Activated T-helper 2 cell treated with anti-CD3 and anti-CD28 coated beads, Interferon-gamma antibody, Interleukin-2, Interleukin-4, amounts not matched to agents 10 μg/mL and 5 μg/mL and 100 μg/mL, durations not matched to agents 14 hours and 24 hours and 36 hours (primary cell): ENCODE measurements at regions of chr4 and their contacts with region 1.

Region 1: GRCh38 chr4:41692717-41693345 is 55.7 kb downstream of the PHOX2B start:
- DNase-seq: peak; percentile 11
- H3K4me3 Mint-ChIP-seq: no peak overlapping the region
- H3K27ac Mint-ChIP-seq: no peak overlapping the region
- H3K4me1 Mint-ChIP-seq: peaks cover 3% of the 10 kb centered on the region
- H3K27me3 Mint-ChIP-seq: peaks cover 6% of the 10 kb centered on the region

Region 2: DNA sequence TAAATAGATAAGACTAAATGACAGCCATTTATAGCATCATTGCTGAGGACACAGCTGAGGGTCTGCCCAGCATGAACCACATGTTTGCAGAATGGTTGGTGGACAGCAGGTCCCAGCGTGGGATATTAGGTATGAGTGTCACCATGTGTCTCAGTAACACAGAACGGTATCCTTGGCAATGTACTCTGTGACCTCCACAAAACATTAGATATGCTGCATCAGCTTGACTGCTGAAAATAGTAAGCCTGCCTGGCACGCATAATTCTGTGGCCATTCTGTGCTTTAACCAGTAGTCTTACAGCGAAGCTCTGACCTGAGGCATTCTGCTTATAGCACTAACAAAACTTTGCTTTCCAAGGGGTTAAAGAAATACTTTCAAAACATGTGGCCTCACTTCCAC is 122.9 kb before region 1 on chr4:
- intact Hi-C with region 1: no loop called
- DNase-seq: no peak
- H3K4me3 Mint-ChIP-seq: no peak overlapping the region
- H3K27ac Mint-ChIP-seq: no peak overlapping the region
- H3K4me1 Mint-ChIP-seq: no peaks in the 10 kb centered on the region
- H3K27me3 Mint-ChIP-seq: no peaks in the 10 kb centered on the region

Region 3: GRCh38 chr4:41887821-41888686 is 195.2 kb after region 1 on chr4:
- intact Hi-C with region 1: loop called (anchors 1 kb)
- DNase-seq: no peak
- H3K4me3 Mint-ChIP-seq: no peak overlapping the region
- H3K27ac Mint-ChIP-seq: no peak overlapping the region
- H3K4me1 Mint-ChIP-seq: no peaks in the 10 kb centered on the region
- H3K27me3 Mint-ChIP-seq: peaks cover 33% of the 10 kb centered on the region

Region 4: GRCh38 chr4:42296196-42296595 is 603.4 kb after region 1 on chr4:
- intact Hi-C with region 1: no loop called
- DNase-seq: no peak
- H3K4me3 Mint-ChIP-seq: no peak overlapping the region
- H3K27ac Mint-ChIP-seq: no peak overlapping the region
- H3K4me1 Mint-ChIP-seq: no peaks in the 10 kb centered on the region
- H3K27me3 Mint-ChIP-seq: peaks cover 4% of the 10 kb centered on the region